Activated CD4-positive, alpha-beta memory T cell treated with anti-CD3 and anti-CD28 coated beads, Interleukin-2, amount 10 ng/mL, durations not matched to agents 7 days and 5 days (primary cell): ENCODE measurements at regions of chr4 and their contacts with region 1.

Region 1: DNA sequence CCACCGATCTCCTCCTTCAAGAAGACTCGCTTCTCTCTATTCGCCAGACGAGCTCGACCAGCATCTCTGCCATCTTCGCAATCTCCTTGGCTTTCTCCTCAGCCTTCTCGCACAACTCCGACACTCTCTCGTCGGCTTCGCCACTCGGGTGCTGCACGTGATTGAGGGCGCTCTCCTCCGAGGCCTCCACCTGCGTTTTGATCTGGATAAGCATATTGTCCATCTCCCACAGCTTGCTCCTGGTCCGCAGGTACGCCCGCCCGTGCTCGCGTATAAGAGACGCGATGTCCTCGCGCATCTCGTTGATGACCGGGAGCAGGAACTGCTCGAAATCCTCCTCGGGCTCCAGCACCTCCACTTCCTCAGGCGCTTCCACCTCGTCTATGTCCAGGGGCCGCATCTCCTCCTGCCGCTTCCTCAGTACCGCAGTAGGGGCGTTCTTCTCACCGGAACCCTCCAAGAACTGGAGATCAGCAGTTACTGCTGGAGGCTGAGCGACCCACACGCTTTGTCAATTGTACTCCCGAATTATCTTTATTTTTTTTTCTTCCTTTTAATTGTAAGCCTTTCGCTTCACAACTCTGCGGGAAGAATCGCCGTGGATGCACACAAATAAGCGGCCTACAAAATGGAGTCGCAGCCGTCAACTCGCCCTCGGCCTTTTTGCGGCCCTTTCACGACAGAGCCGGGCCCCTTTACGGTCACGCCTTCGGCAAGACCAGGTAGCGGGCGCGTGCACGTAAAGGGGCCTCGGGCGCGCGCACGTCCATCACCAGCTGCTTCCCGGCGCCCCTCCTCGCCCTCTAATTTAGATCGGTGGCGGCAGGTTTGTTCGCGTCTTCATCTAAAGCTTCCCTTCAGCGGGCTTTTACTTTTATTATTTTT is at the start of gene MRFAP1L1:
- DNase-seq: peak; percentile 98
- H3K4me3 Mint-ChIP-seq: peak within 1 kb of the TSS; percentile 99
- H3K27ac Mint-ChIP-seq: peak within 1 kb of the TSS; percentile 97
- H3K4me1 Mint-ChIP-seq: peaks cover 49% of the 10 kb centered on the region
- H3K27me3 Mint-ChIP-seq: no peaks in the 10 kb centered on the region
- total RNA-seq, gene MRFAP1L1: 81.9 to 83.1 TPM

Region 2: DNA sequence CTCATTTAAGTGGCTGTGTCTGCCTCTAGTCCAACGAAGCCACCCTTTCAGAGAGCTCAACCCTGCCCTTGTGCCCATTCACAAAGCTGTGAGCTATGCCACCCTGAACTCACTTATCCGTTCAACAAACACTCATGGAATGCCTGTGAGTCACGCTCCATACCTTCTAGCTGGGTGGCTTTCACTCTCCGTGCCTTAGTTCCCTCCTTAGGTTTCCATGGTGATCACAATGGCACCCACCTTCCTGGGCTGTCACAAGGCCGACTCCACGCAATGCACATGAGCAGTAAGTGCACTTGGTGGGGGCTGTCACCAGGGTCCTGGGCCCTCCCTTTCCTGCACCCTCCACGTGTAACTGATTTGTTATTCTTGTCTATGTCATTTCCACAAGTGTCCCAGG is 199.9 kb before region 1 on chr4:
- CTCF ChIA-PET with region 1: no interaction called
- POLR2A ChIA-PET with region 1: no interaction called
- DNase-seq: no peak
- H3K4me3 Mint-ChIP-seq: no peak overlapping the region
- H3K27ac Mint-ChIP-seq: no peak overlapping the region
- H3K4me1 Mint-ChIP-seq: no peaks in the 10 kb centered on the region
- H3K27me3 Mint-ChIP-seq: no peaks in the 10 kb centered on the region

Region 3: GRCh38 chr4:6681187-6681586 is 28.3 kb before region 1 on chr4:
- CTCF ChIA-PET with region 1: interaction called, 62 read pairs
- POLR2A ChIA-PET with region 1: interaction called, 223 read pairs
- DNase-seq: no peak
- H3K4me3 Mint-ChIP-seq: no peak overlapping the region
- H3K27ac Mint-ChIP-seq: no peak overlapping the region
- H3K4me1 Mint-ChIP-seq: peaks cover 46% of the 10 kb centered on the region
- H3K27me3 Mint-ChIP-seq: no peaks in the 10 kb centered on the region

Region 4: DNA sequence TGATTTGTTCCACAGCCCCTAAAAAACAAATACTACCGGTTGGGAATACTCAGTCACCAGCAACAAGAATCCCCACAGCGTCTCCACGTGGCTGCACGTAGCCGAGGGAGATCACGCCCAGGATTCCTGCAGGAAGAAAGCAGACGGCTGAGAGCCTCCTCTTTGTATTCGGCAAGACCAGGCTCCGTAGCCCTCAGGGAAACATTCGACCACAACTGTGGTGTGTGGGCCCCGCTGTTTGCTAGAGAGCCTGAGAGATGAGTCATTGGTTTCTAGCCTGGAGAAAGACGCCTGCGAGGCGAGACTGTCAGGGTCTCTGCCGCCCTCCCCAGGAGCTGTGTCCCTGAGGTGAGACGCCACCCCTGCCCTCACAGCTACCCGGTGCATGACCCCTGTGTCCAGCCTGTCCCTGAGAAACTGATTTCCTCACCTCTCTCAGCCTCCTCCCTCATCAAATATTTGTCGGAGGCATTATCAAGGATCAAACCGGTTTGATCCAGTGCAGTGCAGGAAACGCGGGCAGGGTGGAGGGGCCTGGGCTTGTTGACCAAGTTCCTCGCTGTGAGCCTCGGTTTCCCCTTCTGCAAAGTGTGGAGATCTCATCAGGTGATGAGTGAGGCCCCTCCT is 20.5 kb before region 1 on chr4:
- CTCF ChIA-PET with region 1: interaction called, 41 read pairs
- POLR2A ChIA-PET with region 1: interaction called, 253 read pairs
- DNase-seq: peak; percentile 91
- H3K4me3 Mint-ChIP-seq: peak overlapping the region; percentile 81
- H3K27ac Mint-ChIP-seq: peak overlapping the region; percentile 97
- H3K4me1 Mint-ChIP-seq: peaks cover 87% of the 10 kb centered on the region
- H3K27me3 Mint-ChIP-seq: no peaks in the 10 kb centered on the region

Region 5: DNA sequence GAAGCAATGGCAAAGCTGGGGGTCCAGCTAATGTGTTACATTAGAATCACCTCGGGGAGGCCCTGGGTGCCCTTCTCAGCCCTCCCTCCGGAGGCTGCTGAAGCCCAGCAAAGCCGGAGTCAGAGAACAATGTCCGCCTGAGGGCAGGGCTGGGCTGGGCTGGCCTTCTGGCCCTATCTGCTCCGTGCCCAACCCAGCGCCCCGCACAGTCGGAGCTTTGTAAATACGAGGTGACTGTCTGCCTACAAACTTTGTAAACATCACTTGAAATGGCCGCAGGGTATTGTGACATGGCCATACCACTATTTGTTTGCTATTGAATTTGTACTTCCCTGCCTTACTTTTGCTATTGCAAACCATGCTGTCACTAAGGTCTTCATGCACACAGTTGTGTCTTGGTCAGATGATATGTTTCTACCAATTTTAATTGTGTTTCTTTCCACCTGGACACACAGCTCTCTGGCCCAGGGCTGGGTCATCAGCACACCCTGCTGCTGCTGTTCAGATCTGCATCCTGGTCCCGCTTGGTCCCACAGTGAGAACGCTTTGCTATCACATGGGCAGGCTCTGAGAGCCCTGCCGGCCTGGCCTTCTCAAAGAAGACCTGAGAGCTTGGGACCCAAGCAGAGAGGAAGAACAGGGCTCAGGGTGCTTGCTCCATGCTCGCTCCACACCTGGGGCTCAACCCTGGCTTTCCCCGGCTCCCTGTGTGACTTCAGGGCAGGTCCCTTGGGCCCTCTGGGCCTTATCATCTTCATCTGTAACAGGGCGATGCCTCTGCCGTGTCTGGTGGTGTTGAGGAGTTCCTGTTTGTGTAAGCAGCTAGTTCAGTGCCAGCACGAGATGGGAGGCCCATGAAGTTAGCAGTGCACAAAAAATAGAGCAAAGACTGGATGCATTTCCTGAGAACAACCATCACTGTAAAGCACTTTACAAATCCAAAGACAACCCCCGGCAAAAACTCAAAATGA is 13.5 kb before region 1 on chr4:
- CTCF ChIA-PET with region 1: interaction called, 41 read pairs
- POLR2A ChIA-PET with region 1: interaction called, 253 read pairs
- DNase-seq: peak; percentile 77
- H3K4me3 Mint-ChIP-seq: peak overlapping the region; percentile 61
- H3K27ac Mint-ChIP-seq: peak overlapping the region; percentile 92
- H3K4me1 Mint-ChIP-seq: peaks cover 88% of the 10 kb centered on the region
- H3K27me3 Mint-ChIP-seq: no peaks in the 10 kb centered on the region

Region 6: DNA sequence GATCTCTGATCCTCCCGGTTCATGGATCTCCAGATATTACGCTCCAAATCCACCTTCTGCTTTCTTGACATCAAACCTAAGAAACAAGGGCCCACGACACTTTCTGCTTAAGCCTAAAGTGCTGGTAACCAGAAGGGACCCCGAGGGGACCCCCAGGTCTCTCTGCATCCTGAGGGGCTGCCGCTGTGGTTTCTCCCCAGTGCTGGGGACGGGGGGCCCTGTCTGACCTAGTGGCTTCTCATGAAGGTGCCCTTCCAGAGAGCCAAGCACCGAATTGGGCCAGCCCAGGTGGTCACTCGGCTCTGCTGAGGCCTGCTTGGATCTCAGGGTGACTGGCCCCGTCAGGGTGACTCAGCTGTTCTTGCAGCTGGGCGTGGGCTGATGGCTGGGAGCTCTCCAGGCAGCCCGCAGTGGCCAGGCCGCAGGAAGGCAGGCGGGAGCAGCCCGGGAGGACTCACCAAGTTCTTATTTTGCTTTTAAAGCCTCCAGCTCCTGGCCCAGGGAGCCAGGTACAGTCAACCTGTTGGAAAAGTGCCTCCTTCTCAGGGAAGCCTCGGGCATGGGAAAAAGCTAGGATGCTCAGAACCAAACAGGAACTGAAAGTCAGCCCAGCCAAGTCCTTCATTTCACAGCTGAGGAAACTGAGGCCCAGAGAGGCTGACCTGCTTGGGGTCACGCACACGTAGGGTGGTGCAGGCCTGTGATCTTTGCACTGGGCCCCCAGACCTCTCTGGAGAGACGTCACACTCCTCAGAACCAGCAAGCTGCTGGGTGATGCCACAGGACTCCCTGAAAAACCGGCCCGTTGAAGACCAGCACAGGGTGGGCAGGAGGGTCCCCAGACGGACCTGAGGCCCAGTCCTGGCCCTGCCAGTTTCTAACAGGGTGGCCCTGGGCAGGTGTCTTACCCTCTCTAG is 23.2 kb after region 1 on chr4:
- CTCF ChIA-PET with region 1: no interaction called
- POLR2A ChIA-PET with region 1: no interaction called
- DNase-seq: no peak
- H3K4me3 Mint-ChIP-seq: no peak overlapping the region
- H3K27ac Mint-ChIP-seq: no peak overlapping the region
- H3K4me1 Mint-ChIP-seq: peaks cover 3% of the 10 kb centered on the region
- H3K27me3 Mint-ChIP-seq: peaks cover 2% of the 10 kb centered on the region